ENCODE measurements at regions of chr14 and their contacts with region 1.

Region 1: GRCh38 chr14:57066887-57067513 is 201.7 kb downstream of the EXOC5 start:
- DNase-seq: no peak
- ATAC-seq: no peak
- H3K4me3 Mint-ChIP-seq: no peak overlapping the region
- H3K27ac Mint-ChIP-seq: no peak overlapping the region
- H3K4me1 Mint-ChIP-seq: no peaks in the 10 kb centered on the region
- H3K27me3 Mint-ChIP-seq: peaks cover 24% of the 10 kb centered on the region
- CTCF ChIP-seq: no peak

Region 2: GRCh38 chr14:56659964-56660551 is 406.9 kb before region 1 on chr14:
- CTCF ChIA-PET with region 1: no interaction called
- POLR2A ChIA-PET with region 1: no interaction called
- intact Hi-C with region 1: loop called (anchors 1 kb)
- DNase-seq: no peak
- ATAC-seq: no peak
- H3K4me3 Mint-ChIP-seq: no peak overlapping the region
- H3K27ac Mint-ChIP-seq: no peak overlapping the region
- H3K4me1 Mint-ChIP-seq: no peaks in the 10 kb centered on the region
- H3K27me3 Mint-ChIP-seq: no peaks in the 10 kb centered on the region
- CTCF ChIP-seq: no peak

Region 3: GRCh38 chr14:57293866-57294837 is 227.2 kb after region 1 on chr14:
- CTCF ChIA-PET with region 1: no interaction called
- POLR2A ChIA-PET with region 1: no interaction called
- intact Hi-C with region 1: loop called (anchors 10 kb)
- DNase-seq: no peak
- ATAC-seq: no peak
- H3K4me3 Mint-ChIP-seq: no peak overlapping the region
- H3K27ac Mint-ChIP-seq: no peak overlapping the region
- H3K4me1 Mint-ChIP-seq: no peaks in the 10 kb centered on the region
- H3K27me3 Mint-ChIP-seq: no peaks in the 10 kb centered on the region
- CTCF ChIP-seq: no peak

Region 4: DNA sequence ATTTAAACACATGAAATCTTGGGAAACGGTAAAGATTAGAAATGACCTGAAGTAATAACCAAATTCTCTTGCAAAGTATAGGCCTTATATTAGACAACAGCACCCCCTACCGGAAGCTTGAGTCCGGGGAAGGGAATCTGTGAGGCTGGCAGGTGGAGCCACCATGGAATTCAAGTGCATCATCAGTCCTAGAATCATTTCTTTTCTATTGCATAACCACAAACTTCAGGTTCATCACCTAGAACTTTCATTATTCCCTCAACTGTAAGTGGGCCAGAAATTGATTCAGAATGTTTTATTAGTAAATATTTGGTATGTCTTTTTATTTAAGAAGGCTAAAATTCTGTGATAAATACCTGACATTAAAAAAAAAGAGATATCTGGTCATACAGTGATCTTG is 250.3 kb after region 1 on chr14:
- CTCF ChIA-PET with region 1: no interaction called
- POLR2A ChIA-PET with region 1: no interaction called
- intact Hi-C with region 1: loop called (anchors 2 kb)
- DNase-seq: no peak
- ATAC-seq: peak; percentile 68
- H3K4me3 Mint-ChIP-seq: no peak overlapping the region
- H3K27ac Mint-ChIP-seq: no peak overlapping the region
- H3K4me1 Mint-ChIP-seq: peaks cover 3% of the 10 kb centered on the region
- H3K27me3 Mint-ChIP-seq: no peaks in the 10 kb centered on the region
- CTCF ChIP-seq: peak; percentile 74